Sciatic nerve (tissue), 2 donors: ENCODE measurements at regions of chr16 and their contacts with region 1.

Region 1: DNA sequence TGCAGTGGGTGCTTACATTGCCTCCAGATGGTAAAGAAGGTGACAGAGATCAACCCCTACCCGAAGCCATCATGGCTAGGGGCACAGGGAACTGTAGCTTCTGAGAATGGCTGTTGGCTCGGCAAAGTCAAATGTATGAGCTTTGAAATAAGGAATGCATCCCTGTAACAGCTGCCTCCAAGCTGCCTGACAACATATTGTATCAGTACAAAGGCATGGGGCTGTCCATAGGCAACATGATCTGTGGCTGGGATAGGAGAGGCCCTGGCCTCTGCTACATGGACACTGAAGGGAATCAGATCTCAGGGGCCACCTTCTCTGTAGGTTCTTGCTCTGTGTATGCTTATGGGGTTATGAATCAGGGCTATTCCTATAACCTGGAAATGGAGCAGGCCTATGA is 119.2 kb upstream of the NETO2 start:
- DNase-seq: no peak
- ATAC-seq: no peak

Region 2: DNA sequence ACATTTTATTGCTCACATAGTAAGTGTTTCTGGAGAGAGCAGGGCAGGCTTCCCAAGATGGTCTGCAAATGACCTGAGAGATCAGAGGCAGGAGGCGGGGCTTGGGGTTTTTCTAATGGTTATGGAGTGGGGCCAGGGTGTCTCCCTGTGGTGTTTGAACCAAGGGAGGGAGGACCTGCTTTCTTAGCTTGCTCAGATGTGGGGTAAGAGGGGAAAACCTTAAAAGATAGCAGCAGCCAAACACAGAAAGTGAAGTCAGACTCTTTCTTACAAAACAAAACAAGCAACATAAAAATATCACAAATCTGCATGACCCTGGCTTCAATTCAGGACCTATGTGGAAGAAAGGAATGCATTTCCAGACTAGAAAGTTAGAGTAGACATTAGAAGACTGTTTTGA is 266.5 kb before region 1 on chr16:
- intact Hi-C with region 1: no loop called
- DNase-seq: no peak
- ATAC-seq: no peak

Region 3: DNA sequence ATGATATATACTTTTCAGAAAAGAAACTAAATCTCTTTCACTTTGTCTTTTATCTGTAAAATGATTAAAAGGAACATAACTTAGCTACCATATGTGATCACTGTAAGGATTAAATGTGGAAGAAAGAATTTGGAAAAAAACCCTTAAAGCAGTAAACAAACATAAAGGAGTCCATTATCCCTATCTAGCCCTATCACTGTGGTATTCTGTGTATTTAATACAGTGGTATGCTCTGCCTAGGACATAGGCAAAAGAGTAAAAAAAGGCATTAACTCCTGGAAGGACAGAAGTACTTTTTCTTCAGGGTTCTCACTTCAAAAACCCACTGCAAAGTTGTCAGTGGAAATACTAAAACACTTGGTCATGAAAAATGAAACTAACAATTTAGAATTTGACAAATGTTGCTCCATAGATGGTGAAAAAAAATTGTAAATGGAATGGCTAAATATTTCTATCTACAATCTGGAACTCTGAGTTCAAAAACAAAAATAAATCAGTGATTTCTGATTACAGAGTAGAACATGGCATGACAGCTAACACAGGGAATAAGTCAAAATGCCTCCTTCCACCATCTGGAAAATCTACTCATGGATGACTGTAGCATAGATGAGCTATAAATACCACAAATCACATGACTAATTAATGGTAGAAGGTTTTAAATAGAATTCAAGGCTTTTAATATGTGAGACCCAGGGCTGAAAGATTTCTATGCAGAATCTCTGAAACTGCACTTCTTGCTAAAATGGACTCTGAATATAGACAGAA is 57.8 kb after region 1 on chr16:
- intact Hi-C with region 1: loop called (anchors 10 kb)
- DNase-seq: no peak
- ATAC-seq: no peak

Region 4: GRCh38 chr16:47413041-47413440 is 150.1 kb after region 1 on chr16:
- intact Hi-C with region 1: no loop called
- DNase-seq: no peak
- ATAC-seq: no peak